Activated CD4-positive, alpha-beta memory T cell treated with anti-CD3 and anti-CD28 coated beads, Interleukin-2, amount 10 ng/mL, durations not matched to agents 7 days and 5 days (primary cell): ENCODE measurements at regions of chr6 and their contacts with region 1.

Region 1: DNA sequence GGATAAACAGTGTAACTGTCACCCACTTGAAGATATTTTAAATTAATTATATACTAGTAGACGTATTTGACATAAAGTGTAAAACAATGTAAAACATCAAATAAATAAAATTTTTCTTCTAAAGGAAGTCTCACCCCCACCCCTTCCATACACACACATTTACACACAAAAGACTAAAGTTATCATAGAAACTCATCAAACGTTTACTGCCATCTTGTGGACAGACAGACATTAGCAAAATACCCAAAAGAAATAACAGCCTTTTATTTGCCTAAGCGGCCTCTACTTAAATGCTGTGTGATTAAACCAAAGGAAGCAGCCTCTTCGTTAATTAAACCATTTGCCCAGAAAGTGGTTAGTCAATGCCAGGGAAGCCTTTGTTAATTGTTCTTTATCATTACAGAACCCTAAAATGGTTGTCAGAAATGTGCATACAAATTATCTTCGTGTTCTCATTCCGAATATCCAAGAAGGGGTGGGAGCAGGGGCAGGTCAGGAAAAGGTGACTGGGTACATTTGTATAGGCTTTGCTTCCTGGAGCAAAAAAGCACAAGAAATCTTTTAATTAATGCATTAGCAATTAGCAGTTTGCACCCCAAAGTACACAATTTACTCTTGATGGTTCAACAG is 176.2 kb upstream of the SASH1 start:
- DNase-seq: no peak
- H3K4me3 Mint-ChIP-seq: no peak overlapping the region
- H3K27ac Mint-ChIP-seq: no peak overlapping the region
- H3K4me1 Mint-ChIP-seq: no peaks in the 10 kb centered on the region
- H3K27me3 Mint-ChIP-seq: peaks cover 5% of the 10 kb centered on the region

Region 2: DNA sequence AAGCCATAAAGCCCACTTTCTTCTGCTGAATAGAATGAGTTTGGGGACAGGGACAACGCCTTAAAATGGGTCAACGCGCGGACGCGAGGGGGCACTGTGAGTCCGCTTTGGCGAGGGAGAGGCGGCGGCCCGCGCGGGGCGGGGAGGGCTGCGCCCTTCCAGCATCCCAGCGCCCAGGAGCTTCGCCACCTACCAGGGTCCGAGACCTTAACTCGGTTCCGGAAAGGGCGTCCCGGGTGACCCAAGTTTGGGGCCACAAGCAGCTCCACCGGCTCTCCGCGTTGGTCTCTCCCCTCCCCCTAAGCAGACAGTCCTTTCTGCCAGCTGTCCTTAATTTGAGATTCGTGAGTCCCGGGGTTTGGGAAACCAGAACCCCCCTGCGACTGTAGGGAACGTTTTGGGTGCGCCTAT is 659.7 kb before region 1 on chr6:
- CTCF ChIA-PET with region 1: interaction called, 12 read pairs
- POLR2A ChIA-PET with region 1: no interaction called
- DNase-seq: peak; percentile 50
- H3K4me3 Mint-ChIP-seq: no peak overlapping the region
- H3K27ac Mint-ChIP-seq: no peak overlapping the region
- H3K4me1 Mint-ChIP-seq: peaks cover 19% of the 10 kb centered on the region
- H3K27me3 Mint-ChIP-seq: peaks cover 45% of the 10 kb centered on the region

Region 3: GRCh38 chr6:148146717-148147462 is 19.6 kb before region 1 on chr6:
- CTCF ChIA-PET with region 1: interaction called, 12 read pairs
- POLR2A ChIA-PET with region 1: no interaction called
- DNase-seq: peak; percentile 49
- H3K4me3 Mint-ChIP-seq: no peak overlapping the region
- H3K27ac Mint-ChIP-seq: no peak overlapping the region
- H3K4me1 Mint-ChIP-seq: peaks cover 14% of the 10 kb centered on the region
- H3K27me3 Mint-ChIP-seq: peaks cover 7% of the 10 kb centered on the region

Region 4: DNA sequence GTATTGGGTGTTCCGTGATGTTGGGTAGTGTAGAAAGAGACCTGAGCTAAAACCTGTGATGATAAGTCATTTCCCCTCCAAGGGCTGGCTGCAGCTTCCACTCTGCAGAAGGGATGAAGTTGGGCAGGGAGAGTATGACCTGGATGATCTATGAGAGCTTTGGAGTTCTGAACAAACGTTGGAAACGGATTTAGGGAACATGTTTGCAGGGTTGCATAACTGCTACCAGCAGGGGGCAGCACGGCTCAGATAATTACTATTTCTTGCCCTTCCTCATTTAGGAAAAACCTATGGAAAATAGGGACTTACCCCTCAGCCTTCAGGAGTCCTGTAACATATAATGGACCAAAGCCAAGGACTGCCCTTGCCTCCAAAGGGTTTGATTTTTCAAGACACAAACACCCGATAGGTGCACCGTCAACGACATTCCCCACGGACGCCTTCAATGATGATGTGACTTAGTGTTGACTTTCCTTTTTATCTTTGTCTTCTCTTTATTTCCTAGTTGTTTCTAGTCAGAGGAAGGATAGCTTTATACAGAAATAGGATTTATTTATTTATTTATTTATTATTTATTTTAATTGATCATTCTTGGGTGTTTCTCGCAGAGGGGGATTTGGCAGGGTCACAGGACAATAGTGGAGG is 11.3 kb after region 1 on chr6:
- CTCF ChIA-PET with region 1: interaction called, 12 read pairs
- POLR2A ChIA-PET with region 1: no interaction called
- DNase-seq: peak; percentile 21
- H3K4me3 Mint-ChIP-seq: no peak overlapping the region
- H3K27ac Mint-ChIP-seq: no peak overlapping the region
- H3K4me1 Mint-ChIP-seq: no peaks in the 10 kb centered on the region
- H3K27me3 Mint-ChIP-seq: peaks cover 12% of the 10 kb centered on the region